OCI-LY7 (cell line): ENCODE measurements at regions of chr5 and their contacts with region 1.

Region 1: DNA sequence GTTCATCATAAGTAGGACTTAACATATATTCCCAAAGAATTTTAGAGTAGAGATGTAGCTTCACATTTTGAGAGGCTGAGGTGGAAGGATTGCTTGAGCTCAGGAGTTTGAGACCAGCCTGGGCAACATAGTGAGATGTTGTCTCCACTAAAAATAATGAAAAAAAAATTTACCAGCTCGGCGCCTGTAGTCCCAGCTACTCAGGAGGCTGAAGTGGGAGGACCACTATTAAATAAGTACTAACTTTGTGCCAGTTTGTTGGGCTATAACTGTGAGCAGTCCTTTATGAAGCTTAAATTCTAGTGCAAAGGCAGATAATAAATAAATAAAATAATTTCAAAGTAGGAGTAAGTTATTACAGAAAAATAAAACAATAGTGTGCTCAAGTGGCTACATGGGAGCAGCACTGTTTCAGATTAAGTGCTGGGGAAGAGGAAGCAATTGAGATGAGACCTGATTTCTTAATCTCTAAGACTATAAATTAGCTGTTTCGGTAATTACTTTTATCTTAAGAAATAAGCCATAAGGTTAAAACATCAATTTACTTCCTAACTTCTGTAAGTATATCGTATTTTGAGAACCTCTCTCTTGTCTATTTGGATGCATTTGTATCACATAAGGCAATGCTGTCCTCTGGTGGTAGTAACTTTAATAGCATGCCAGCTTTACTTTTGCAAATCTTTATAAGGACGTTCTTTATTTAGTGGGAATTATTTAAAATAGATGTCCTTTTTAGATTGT is 98.9 kb downstream of the CSNK1G3 start:
- DNase-seq: peak; percentile 67
- H3K4me3 ChIP-seq: no peak overlapping the region
- H3K27ac ChIP-seq: no peak overlapping the region
- H3K4me1 ChIP-seq: no peaks in the 10 kb centered on the region
- CTCF ChIP-seq: peak; percentile 100

Region 2: DNA sequence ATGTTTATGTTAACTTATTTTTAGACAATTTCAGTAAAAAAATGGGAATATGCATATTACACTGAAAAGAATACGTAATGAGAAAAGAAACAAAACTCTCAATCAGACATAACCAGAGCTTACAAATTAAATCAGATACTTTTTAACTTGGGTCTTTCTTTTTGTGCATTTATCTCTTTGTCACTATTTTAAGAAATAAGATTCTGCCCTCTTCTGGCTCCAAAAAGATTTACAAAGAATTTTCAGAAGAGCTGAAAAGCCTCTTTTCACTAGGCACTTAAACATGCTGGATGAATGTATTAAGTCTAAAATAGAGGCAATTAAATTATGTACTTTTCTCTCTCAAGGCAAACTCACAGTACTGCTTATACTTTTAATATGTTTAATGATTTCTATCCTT is 243.1 kb before region 1 on chr5:
- CTCF ChIA-PET with region 1: no interaction called
- POLR2A ChIA-PET with region 1: no interaction called
- intact Hi-C with region 1: loop called (anchors 10 kb)
- DNase-seq: peak; percentile 38
- H3K4me3 ChIP-seq: no peak overlapping the region
- H3K27ac ChIP-seq: no peak overlapping the region
- H3K4me1 ChIP-seq: no peaks in the 10 kb centered on the region
- CTCF ChIP-seq: peak; percentile 76

Region 3: GRCh38 chr5:123855608-123856007 is 244.8 kb after region 1 on chr5:
- CTCF ChIA-PET with region 1: no interaction called
- POLR2A ChIA-PET with region 1: no interaction called
- intact Hi-C with region 1: no loop called
- DNase-seq: no peak
- H3K4me3 ChIP-seq: no peak overlapping the region
- H3K27ac ChIP-seq: no peak overlapping the region
- H3K4me1 ChIP-seq: no peaks in the 10 kb centered on the region
- CTCF ChIP-seq: no peak